Calu3 (cell line): ENCODE measurements at regions of chr20 and their contacts with region 1.

Region 1: DNA sequence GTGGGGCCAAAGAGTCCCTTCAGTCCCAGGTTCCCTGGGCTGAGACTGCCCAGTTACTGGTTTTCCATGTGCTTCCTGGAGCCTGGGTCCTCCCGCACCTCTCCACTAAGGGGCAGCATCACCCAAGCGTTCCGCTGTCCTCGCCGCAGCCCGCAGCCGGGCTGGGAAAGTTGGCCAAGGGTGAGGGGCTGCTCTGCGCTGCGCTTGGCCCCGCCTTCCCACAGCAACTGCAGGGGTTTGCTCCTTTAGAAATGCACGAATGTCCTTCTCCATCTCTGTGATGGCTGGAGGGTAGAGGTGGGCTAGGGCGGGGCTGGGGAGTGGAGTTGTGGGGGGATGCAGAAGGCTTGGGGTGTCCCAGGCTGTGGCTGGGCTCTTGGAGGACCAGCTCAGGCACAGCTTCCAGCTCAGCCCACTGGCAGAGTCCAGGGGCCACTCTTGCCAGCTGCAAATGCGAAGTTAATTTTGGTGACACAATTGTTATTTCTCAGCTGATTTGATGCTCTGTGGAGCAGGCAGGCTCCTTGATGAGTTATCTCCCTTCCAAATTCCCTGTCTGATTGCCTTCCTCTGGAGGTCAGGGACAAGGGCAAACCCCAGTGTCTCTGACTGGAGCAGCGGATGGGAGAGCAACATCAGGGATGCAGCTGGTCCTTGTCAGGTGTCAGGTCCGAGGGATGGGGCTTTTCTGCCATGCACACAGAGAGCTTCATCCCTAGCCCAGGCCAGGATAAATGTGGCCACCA is 63.2 kb downstream of the NOL4L start:
- DNase-seq: peak; percentile 89
- H3K4me3 Mint-ChIP-seq: no peak overlapping the region
- H3K27ac Mint-ChIP-seq: no peak overlapping the region
- H3K4me1 Mint-ChIP-seq: no peaks in the 10 kb centered on the region
- H3K27me3 Mint-ChIP-seq: peaks cover 94% of the 10 kb centered on the region
- CTCF ChIP-seq: peak; percentile 90

Region 2: DNA sequence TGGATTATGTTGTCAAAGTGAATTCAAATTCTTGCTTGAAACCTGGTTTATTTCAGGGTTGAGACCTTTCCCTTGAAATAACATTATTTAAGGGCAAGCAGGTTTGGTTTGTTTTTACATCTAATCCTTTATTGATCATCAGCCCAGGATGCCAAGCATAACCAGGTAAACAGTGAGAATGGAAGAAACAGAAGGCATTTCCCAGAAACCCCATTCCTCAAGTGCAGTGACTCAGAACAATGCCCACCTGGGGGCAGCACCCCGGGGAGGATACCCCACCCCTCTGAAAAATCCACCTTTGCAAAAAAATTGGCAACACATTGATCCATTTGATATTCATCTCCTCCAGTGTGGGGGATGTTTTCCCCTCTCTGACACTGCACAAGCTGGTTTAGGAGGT is 281.7 kb before region 1 on chr20:
- CTCF ChIA-PET with region 1: no interaction called
- intact Hi-C with region 1: no loop called
- DNase-seq: peak; percentile 44
- H3K4me3 Mint-ChIP-seq: no peak overlapping the region
- H3K27ac Mint-ChIP-seq: no peak overlapping the region
- H3K4me1 Mint-ChIP-seq: peaks cover 13% of the 10 kb centered on the region
- H3K27me3 Mint-ChIP-seq: no peaks in the 10 kb centered on the region
- CTCF ChIP-seq: no peak

Region 3: GRCh38 chr20:32387252-32387651 is 134.7 kb before region 1 on chr20:
- CTCF ChIA-PET with region 1: no interaction called
- intact Hi-C with region 1: no loop called
- DNase-seq: no peak
- H3K4me3 Mint-ChIP-seq: no peak overlapping the region
- H3K27ac Mint-ChIP-seq: no peak overlapping the region
- H3K4me1 Mint-ChIP-seq: peaks cover 13% of the 10 kb centered on the region
- H3K27me3 Mint-ChIP-seq: no peaks in the 10 kb centered on the region
- CTCF ChIP-seq: no peak

Region 4: DNA sequence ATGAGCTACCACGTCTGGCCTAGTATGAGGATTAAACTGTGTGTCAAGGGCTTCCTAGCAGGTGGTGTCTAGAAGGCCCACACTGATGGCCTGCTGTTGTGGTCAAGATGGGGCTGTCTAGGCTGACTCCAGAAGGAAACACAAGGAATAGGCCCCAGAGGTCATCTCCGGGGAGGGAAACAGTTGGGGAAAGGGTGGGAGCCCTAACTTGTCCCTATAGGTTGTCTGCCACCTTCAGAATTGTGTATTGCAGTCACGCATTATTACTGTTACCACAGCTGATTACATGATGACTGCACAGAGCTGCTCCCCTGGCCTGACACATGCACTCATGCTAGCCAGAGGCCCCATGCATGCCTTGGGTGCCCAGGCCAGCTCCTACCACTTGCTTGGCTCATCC is 124.5 kb after region 1 on chr20:
- CTCF ChIA-PET with region 1: interaction called, 33 read pairs
- intact Hi-C with region 1: no loop called
- DNase-seq: no peak
- H3K4me3 Mint-ChIP-seq: no peak overlapping the region
- H3K27ac Mint-ChIP-seq: no peak overlapping the region
- H3K4me1 Mint-ChIP-seq: peaks cover 4% of the 10 kb centered on the region
- H3K27me3 Mint-ChIP-seq: peaks cover 86% of the 10 kb centered on the region
- CTCF ChIP-seq: no peak

Region 5: DNA sequence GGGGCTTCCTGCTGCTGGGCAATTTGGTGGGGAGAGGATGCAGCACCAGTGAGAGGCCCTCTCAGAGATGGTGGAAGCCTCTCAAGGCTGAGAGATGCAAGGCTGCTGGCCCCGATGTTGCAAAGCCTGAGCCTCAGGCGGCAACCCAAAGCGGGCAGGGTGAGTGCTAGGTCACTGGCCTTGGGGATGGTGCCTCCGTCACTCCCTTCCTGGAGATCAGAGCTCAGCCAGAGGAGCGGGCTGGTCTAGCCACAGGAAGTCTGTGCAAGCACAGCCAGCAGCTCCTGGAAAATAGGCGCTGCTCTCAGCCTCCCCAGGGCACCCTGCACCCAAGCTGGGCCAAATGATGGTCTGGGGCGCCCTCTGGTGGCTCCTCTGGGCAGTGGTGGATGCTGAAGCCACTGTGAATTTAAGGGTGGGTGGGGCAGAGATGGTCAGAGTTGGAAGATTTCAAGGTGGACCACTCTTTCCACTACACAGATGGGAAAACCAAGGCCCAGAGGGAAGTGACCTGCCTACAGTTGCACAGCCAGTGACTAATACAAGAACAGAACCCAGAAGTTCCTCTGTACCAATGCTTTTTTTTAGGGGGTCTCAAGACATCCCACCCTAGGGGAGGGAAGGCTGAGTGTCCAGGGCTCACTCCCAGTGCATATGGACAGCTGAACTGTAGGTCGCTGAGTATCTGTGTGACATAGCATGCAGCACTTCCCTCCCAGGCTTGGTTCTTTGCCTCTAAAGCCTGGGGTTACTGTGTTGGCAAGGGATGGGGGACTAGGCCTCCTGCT is 131.0 kb after region 1 on chr20:
- CTCF ChIA-PET with region 1: interaction called, 33 read pairs
- intact Hi-C with region 1: loop called (anchors 1 kb)
- DNase-seq: peak; percentile 95
- H3K4me3 Mint-ChIP-seq: no peak overlapping the region
- H3K27ac Mint-ChIP-seq: no peak overlapping the region
- H3K4me1 Mint-ChIP-seq: peaks cover 8% of the 10 kb centered on the region
- H3K27me3 Mint-ChIP-seq: peaks cover 46% of the 10 kb centered on the region
- CTCF ChIP-seq: peak; percentile 99